Right ventricle myocardium inferior (tissue), 1 donor: ENCODE measurements at regions of chr11 and their contacts with region 1.

Region 1: GRCh38 chr11:131674051-131674755 is 303.8 kb downstream of the NTM start:
- DNase-seq: peak; percentile 87
- ATAC-seq: peak; percentile 87

Region 2: GRCh38 chr11:131064373-131064991 is 609.7 kb before region 1 on chr11:
- intact Hi-C with region 1: loop called (anchors 2 kb)
- DNase-seq: no peak
- ATAC-seq: no peak

Region 3: DNA sequence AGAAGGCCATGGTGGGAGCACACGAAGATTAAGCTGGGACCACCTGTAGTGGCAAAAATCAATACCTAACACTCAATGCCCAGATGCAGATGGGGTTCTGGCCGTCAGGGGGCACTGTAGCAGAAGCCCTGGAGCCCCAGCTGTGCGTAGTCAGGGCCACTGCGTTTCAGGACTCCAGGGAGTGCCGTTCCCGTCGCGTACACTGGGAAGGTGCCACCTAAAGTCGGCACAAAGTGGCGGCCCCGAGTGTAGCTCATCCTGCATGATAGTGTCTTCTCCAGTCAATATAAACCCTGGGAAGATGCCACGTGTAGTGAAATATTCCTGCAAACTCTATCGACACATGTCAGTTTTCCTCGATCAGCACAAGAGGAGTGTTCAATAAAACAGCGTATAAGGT is 427.5 kb before region 1 on chr11:
- intact Hi-C with region 1: loop called (anchors 2 kb)
- DNase-seq: peak; percentile 73
- ATAC-seq: peak; percentile 57

Region 4: GRCh38 chr11:131408025-131408640 is 266.1 kb before region 1 on chr11:
- intact Hi-C with region 1: loop called (anchors 5 kb)
- DNase-seq: no peak
- ATAC-seq: peak; percentile 79

Region 5: GRCh38 chr11:131504199-131504949 is 169.8 kb before region 1 on chr11:
- intact Hi-C with region 1: loop called (anchors 5 kb)
- DNase-seq: no peak
- ATAC-seq: peak; percentile 63

Region 6: DNA sequence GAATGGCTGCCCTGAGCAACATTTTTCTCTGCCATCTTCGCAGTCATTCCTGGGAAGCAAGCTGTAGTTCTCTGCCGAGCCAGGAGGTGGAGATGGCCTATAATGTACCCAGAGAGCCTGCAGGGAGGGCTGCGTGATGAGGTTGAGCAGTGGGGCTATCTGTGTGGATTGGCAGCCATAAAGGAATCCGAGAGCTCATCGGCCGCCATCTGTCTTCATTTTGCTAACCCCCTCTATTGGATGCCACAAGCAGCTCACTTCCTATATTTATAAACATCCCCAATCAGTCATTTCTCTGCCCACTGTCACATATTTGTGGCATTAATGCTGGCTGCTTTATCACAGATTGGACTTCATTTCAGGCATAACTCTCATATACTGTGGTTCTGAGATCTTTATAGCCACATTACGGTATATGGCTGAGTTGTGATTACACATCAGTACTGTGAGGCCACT is 94.2 kb before region 1 on chr11:
- intact Hi-C with region 1: loop called (anchors 5 kb)
- DNase-seq: no peak
- ATAC-seq: no peak

Region 7: DNA sequence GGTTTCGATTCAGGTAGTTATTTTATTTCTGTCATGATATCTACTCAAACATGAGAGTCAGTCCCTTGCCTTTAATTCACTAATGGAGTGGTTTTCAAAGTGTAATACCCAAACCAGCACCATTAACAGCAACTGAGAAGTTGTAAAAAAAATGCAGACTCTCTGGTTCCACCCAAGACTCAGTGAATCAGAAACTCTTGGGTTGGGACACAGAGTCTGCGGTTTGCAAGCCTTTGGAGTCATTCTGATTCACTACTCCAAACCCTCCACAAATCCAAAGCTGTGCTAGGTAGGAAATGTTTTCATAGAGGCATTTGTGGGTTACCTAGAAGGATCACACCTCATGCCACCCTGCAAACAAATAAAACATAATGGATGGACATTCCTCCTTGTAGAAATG is 36.3 kb after region 1 on chr11:
- intact Hi-C with region 1: no loop called
- DNase-seq: no peak
- ATAC-seq: no peak

Region 8: GRCh38 chr11:131760091-131761061 is 86.2 kb after region 1 on chr11:
- intact Hi-C with region 1: no loop called
- DNase-seq: no peak
- ATAC-seq: no peak